Dendritic cell treated with granulocyte-macrophage colony-stimulating factor and Interleukin-4, amounts not matched to agents 40 ng/mL and 50 ng/mL, for 4 days (primary cell): ENCODE measurements at regions of chr6 and their contacts with region 1.

Region 1: GRCh38 chr6:44237813-44238433 is 9.0 kb upstream of the HSP90AB1 start:
- H3K4me3 Mint-ChIP-seq: peak overlapping the region; percentile 96
- H3K27ac Mint-ChIP-seq: peak overlapping the region; percentile 98
- H3K4me1 Mint-ChIP-seq: peaks cover 46% of the 10 kb centered on the region
- H3K27me3 Mint-ChIP-seq: peaks cover 6% of the 10 kb centered on the region

Region 2: DNA sequence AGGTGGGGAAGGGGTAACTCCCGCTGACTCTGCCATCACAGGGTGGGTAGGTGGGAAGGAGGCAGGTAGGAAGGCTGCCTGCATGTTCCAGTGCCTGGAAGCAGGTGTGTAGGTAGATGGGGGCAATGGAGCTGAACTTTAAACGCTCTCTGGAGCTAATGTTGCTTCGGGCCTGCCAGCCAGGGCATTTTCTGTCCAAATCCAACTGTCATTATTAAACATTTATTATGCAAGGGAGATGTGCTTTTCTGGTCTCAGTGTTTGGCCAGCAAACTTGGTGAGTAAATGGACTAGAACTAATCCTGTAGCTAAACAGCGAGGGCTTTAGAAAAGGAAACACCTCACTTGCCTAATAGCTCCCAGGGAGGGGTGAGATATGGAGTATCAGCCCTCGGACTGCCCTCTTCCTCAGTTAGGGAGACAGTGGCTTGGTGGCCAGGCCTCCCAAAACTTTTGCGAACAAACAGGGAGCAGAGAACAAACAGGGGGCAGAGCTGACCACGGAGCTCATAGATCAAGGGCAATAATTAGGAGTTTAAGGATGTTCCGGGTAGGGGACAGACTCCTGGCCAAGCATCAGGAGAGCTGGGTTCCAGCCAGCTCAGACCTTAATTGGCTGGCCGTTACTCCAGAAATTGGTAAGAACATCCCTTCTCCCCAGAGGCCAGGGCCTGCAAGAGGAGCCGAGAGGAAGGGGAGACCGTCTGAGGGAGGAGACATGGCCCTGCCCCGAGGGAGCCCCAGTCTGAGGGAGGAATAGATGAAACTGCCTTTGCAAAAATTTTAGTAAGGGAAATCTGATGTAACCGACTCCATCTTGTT is 336.8 kb before region 1 on chr6:
- intact Hi-C with region 1: no loop called
- H3K4me3 Mint-ChIP-seq: no peak overlapping the region
- H3K27ac Mint-ChIP-seq: no peak overlapping the region
- H3K4me1 Mint-ChIP-seq: peaks cover 12% of the 10 kb centered on the region
- H3K27me3 Mint-ChIP-seq: peaks cover 15% of the 10 kb centered on the region

Region 3: DNA sequence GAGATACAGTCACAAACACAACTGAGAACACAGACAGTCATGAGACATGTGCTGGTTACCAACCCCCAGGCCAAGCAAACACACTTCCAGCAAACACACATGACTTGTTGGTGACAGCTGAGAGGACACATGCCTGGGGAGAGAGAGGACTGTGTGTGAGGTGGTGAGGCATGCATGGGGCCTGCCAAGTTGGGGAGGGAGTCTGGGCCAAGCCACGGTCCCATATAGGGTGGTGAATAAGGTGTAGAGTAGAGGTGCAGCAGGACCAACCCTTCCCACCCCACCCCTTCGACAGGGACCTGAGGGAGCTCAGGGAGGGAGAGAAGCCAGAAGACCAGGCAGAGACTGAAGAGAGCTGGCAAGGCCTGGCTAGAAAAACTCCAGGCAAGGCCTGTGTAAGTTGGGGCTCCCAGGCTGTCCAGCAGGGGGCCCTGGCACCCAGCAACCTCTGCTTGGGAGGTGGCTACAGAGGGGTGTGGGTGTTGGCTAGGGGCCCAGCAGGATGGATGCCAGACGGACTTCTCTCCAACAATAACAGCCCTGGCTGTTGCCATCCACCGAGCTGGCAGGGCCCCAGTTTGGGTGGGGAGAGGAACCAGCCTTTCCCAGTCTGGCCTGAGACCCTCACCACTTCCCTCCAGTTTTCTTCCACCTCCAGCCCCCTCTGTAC is 16.5 kb before region 1 on chr6:
- intact Hi-C with region 1: loop called (anchors 2 kb)
- H3K4me3 Mint-ChIP-seq: no peak overlapping the region
- H3K27ac Mint-ChIP-seq: peak overlapping the region; percentile 59
- H3K4me1 Mint-ChIP-seq: peaks cover 88% of the 10 kb centered on the region
- H3K27me3 Mint-ChIP-seq: peaks cover 24% of the 10 kb centered on the region